MCF 10A (cell line): ENCODE measurements at regions of chr16 and their contacts with region 1.

Region 1: GRCh38 chr16:30692381-30693064 is 6.4 kb upstream of the SRCAP start:
- DNase-seq: no peak
- H3K4me3 Mint-ChIP-seq: no peak overlapping the region
- H3K27ac Mint-ChIP-seq: no peak overlapping the region
- H3K4me1 Mint-ChIP-seq: peaks cover 10% of the 10 kb centered on the region
- H3K27me3 Mint-ChIP-seq: no peaks in the 10 kb centered on the region
- CTCF ChIP-seq: no peak

Region 2: GRCh38 chr16:30657866-30658730 is 34.4 kb before region 1 on chr16 and contains the start of gene FBRS:
- CTCF ChIA-PET with region 1: interaction called, 14 read pairs
- POLR2A ChIA-PET with region 1: interaction called, 13 read pairs
- intact Hi-C with region 1: loop called (anchors 1 kb)
- DNase-seq: peak; percentile 100
- H3K4me3 Mint-ChIP-seq: peak within 1 kb of the TSS; percentile 93
- H3K27ac Mint-ChIP-seq: peak within 1 kb of the TSS; percentile 100
- H3K4me1 Mint-ChIP-seq: peaks cover 21% of the 10 kb centered on the region
- H3K27me3 Mint-ChIP-seq: no peaks in the 10 kb centered on the region
- CTCF ChIP-seq: peak; percentile 57
- total RNA-seq, gene FBRS: 69.1 and 80.8 TPM in 2 replicates

Region 3: DNA sequence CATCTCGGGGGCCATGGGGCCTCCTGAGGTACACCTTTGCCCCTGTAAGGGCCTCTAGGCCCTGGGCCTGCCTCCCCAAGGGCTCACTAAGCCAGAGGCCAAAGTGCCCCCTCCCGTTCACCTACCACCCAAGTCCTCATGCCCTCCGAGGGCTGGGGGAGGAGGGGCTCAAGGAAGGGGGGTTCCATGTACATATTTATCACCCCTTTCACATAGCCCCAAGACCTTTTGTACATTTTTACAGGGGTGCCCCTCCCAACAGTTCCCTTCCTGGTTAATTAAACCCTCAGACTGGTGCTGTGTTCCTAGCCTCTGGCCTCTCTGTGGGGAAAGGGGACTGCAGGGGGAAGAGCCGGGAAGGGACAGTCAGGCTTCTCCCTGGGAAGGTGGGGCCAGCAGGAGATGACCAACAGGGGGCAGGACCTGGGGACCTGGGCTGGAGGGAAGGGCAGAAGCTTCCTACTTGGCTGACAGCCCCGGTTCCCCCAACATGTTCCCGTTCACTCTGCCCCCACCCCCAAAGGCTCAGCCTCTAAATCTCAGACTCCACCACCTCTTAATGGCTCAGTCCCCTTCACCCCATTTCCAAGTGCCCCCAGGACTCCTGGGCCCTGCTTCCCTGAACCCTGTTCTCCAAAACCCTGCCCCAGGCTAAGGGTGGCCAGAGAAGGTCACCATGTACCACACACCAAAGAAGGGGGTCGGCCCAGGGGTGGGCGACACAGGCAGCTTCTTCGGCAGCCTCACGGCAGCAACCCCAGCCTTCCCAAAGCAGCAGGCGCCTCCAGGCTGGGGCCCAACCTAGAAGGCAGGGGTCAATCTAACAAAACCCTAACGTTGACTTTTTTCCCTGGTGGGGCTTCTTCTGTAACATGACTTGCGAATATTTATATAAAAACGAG is 22.4 kb before region 1 on chr16:
- CTCF ChIA-PET with region 1: interaction called, 12 read pairs
- POLR2A ChIA-PET with region 1: interaction called, 5 read pairs
- intact Hi-C with region 1: loop called (anchors 2 kb)
- DNase-seq: no peak
- H3K4me3 Mint-ChIP-seq: no peak overlapping the region
- H3K27ac Mint-ChIP-seq: no peak overlapping the region
- H3K4me1 Mint-ChIP-seq: no peaks in the 10 kb centered on the region
- H3K27me3 Mint-ChIP-seq: no peaks in the 10 kb centered on the region
- CTCF ChIP-seq: no peak

Region 4: GRCh38 chr16:30677931-30678585 is 14.5 kb before region 1 on chr16:
- CTCF ChIA-PET with region 1: interaction called, 12 read pairs
- POLR2A ChIA-PET with region 1: interaction called, 4 read pairs
- intact Hi-C with region 1: loop called (anchors 2 kb)
- DNase-seq: no peak
- H3K4me3 Mint-ChIP-seq: no peak overlapping the region
- H3K27ac Mint-ChIP-seq: no peak overlapping the region
- H3K4me1 Mint-ChIP-seq: no peaks in the 10 kb centered on the region
- H3K27me3 Mint-ChIP-seq: no peaks in the 10 kb centered on the region
- CTCF ChIP-seq: no peak